Naive thymus-derived CD4-positive, alpha-beta T cell (primary cell): ENCODE measurements at regions of chr3 and their contacts with region 1.

Region 1: GRCh38 chr3:187974871-187975271 is 179.1 kb upstream of the LPP start:
- DNase-seq: peak in 6 of 9 donors; percentile 8 to 42 (median 32)
- ATAC-seq: peak; percentile 67
- H3K4me3 ChIP-seq: peak overlapping the region; percentile 3
- H3K4me3 Mint-ChIP-seq: peak overlapping the region; percentile 41 to 85 (median 76)
- H3K27ac ChIP-seq: no peak overlapping the region
- H3K27ac Mint-ChIP-seq: peak overlapping the region; percentile 44 to 96 (median 80)
- H3K4me1 ChIP-seq: peaks cover 36 to 40% of the 10 kb centered on the region in 2 donors
- H3K4me1 Mint-ChIP-seq: peaks cover 31 to 71% (median 49%) of the 10 kb centered on the region in 7 donors
- H3K27me3 ChIP-seq: no peaks in the 10 kb centered on the region
- H3K27me3 Mint-ChIP-seq: no peaks in the 10 kb centered on the region

Region 2: GRCh38 chr3:187963677-187964385 is 11.0 kb before region 1 on chr3:
- CTCF ChIA-PET with region 1: no interaction called
- POLR2A ChIA-PET with region 1: interaction called, 3 read pairs
- intact Hi-C with region 1: loop called in 1 of 2 experiments (anchors 1 kb)
- DNase-seq: no peak
- ATAC-seq: peak; percentile 61
- H3K4me3 ChIP-seq: no peak overlapping the region
- H3K4me3 Mint-ChIP-seq: no peak overlapping the region
- H3K27ac ChIP-seq: no peak overlapping the region
- H3K27ac Mint-ChIP-seq: peak overlapping the region in 2 of 9 donors; percentile 16 to 44
- H3K4me1 ChIP-seq: peaks cover 7 to 20% of the 10 kb centered on the region in 2 donors
- H3K4me1 Mint-ChIP-seq: peaks cover 2 to 11% (median 9%) of the 10 kb centered on the region in 7 donors
- H3K27me3 ChIP-seq: no peaks in the 10 kb centered on the region
- H3K27me3 Mint-ChIP-seq: peaks cover 0 to 5% (median 0%) of the 10 kb centered on the region in 5 donors

Region 3: GRCh38 chr3:187989575-187990153 is 14.8 kb after region 1 on chr3:
- CTCF ChIA-PET with region 1: no interaction called
- POLR2A ChIA-PET with region 1: no interaction called
- intact Hi-C with region 1: no loop called
- DNase-seq: no peak
- ATAC-seq: no peak
- H3K4me3 ChIP-seq: no peak overlapping the region
- H3K4me3 Mint-ChIP-seq: peak overlapping the region in 1 of 10 donors; percentile 38
- H3K27ac ChIP-seq: no peak overlapping the region
- H3K27ac Mint-ChIP-seq: no peak overlapping the region
- H3K4me1 ChIP-seq: peaks cover 11 to 44% of the 10 kb centered on the region in 2 donors
- H3K4me1 Mint-ChIP-seq: peaks cover 42 to 65% (median 60%) of the 10 kb centered on the region in 7 donors
- H3K27me3 ChIP-seq: no peaks in the 10 kb centered on the region
- H3K27me3 Mint-ChIP-seq: no peaks in the 10 kb centered on the region

Region 4: GRCh38 chr3:188061133-188061532 is 86.3 kb after region 1 on chr3:
- CTCF ChIA-PET with region 1: no interaction called
- POLR2A ChIA-PET with region 1: no interaction called
- intact Hi-C with region 1: loop called (anchors 1 to 5 kb)
- DNase-seq: peak in 6 of 9 donors; percentile 4 to 60 (median 11)
- ATAC-seq: peak; percentile 86
- H3K4me3 ChIP-seq: no peak overlapping the region
- H3K4me3 Mint-ChIP-seq: peak overlapping the region in 1 of 10 donors; percentile 62
- H3K27ac ChIP-seq: no peak overlapping the region
- H3K27ac Mint-ChIP-seq: peak overlapping the region in 4 of 9 donors; percentile 19 to 74 (median 31)
- H3K4me1 ChIP-seq: peaks cover 3 to 8% of the 10 kb centered on the region in 2 donors
- H3K4me1 Mint-ChIP-seq: peaks cover 0 to 25% (median 13%) of the 10 kb centered on the region in 7 donors
- H3K27me3 ChIP-seq: no peaks in the 10 kb centered on the region
- H3K27me3 Mint-ChIP-seq: no peaks in the 10 kb centered on the region

Region 5: GRCh38 chr3:188220988-188221818 is 246.3 kb after region 1 on chr3:
- CTCF ChIA-PET with region 1: no interaction called
- POLR2A ChIA-PET with region 1: no interaction called
- intact Hi-C with region 1: no loop called
- DNase-seq: no peak
- ATAC-seq: no peak
- H3K4me3 ChIP-seq: no peak overlapping the region
- H3K4me3 Mint-ChIP-seq: no peak overlapping the region
- H3K27ac ChIP-seq: no peak overlapping the region
- H3K27ac Mint-ChIP-seq: no peak overlapping the region
- H3K4me1 ChIP-seq: no peaks in the 10 kb centered on the region
- H3K4me1 Mint-ChIP-seq: peaks cover 12 to 21% (median 18%) of the 10 kb centered on the region in 7 donors
- H3K27me3 ChIP-seq: no peaks in the 10 kb centered on the region
- H3K27me3 Mint-ChIP-seq: no peaks in the 10 kb centered on the region

Region 6: GRCh38 chr3:188286087-188286513 is 311.2 kb after region 1 on chr3:
- CTCF ChIA-PET with region 1: no interaction called
- POLR2A ChIA-PET with region 1: no interaction called
- intact Hi-C with region 1: loop called in 1 of 2 experiments (anchors 10 kb)
- DNase-seq: no peak
- ATAC-seq: no peak
- H3K4me3 ChIP-seq: no peak overlapping the region
- H3K4me3 Mint-ChIP-seq: no peak overlapping the region
- H3K27ac ChIP-seq: no peak overlapping the region
- H3K27ac Mint-ChIP-seq: peak overlapping the region in 2 of 9 donors; percentile 14 to 39
- H3K4me1 ChIP-seq: peaks cover 7% of the 10 kb centered on the region in 2 donors
- H3K4me1 Mint-ChIP-seq: peaks cover 19 to 49% (median 28%) of the 10 kb centered on the region in 7 donors
- H3K27me3 ChIP-seq: no peaks in the 10 kb centered on the region
- H3K27me3 Mint-ChIP-seq: no peaks in the 10 kb centered on the region

Region 7: DNA sequence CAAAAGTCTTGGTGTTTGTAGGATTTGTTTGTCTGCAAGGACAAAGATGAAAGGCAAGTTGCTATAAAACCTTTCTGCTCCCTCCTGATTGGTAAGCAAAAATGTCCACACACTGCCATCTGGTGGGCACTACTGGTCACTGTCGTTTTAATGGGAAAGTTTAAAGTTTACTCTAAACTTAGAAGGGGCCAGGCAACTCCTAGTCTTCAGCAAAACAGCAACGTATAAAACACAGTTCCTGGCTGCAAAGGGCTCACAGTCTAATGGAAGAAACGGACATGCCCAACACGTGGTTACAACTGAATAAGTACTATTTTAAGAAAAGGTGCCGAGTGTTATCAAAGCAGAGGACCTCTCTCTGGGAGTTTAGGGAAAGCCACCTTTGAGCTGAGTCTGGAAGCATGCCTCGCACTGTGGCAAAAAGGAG is 1173.2 kb after region 1 on chr3:
- CTCF ChIA-PET with region 1: no interaction called
- POLR2A ChIA-PET with region 1: no interaction called
- intact Hi-C with region 1: loop called in 1 of 2 experiments (anchors 5 kb)
- DNase-seq: peak; percentile 22 to 61 (median 51)
- ATAC-seq: peak; percentile 85
- H3K4me3 ChIP-seq: no peak overlapping the region
- H3K4me3 Mint-ChIP-seq: no peak overlapping the region
- H3K27ac ChIP-seq: no peak overlapping the region
- H3K27ac Mint-ChIP-seq: peak overlapping the region in 1 of 9 donors; percentile 21
- H3K4me1 ChIP-seq: peaks cover 0 to 16% of the 10 kb centered on the region in 2 donors
- H3K4me1 Mint-ChIP-seq: peaks cover 6 to 35% (median 8%) of the 10 kb centered on the region in 7 donors
- H3K27me3 ChIP-seq: no peaks in the 10 kb centered on the region
- H3K27me3 Mint-ChIP-seq: peaks cover 0 to 20% (median 0%) of the 10 kb centered on the region in 5 donors